ENCODE measurements at regions of chr16 and their contacts with region 1.

Region 1: DNA sequence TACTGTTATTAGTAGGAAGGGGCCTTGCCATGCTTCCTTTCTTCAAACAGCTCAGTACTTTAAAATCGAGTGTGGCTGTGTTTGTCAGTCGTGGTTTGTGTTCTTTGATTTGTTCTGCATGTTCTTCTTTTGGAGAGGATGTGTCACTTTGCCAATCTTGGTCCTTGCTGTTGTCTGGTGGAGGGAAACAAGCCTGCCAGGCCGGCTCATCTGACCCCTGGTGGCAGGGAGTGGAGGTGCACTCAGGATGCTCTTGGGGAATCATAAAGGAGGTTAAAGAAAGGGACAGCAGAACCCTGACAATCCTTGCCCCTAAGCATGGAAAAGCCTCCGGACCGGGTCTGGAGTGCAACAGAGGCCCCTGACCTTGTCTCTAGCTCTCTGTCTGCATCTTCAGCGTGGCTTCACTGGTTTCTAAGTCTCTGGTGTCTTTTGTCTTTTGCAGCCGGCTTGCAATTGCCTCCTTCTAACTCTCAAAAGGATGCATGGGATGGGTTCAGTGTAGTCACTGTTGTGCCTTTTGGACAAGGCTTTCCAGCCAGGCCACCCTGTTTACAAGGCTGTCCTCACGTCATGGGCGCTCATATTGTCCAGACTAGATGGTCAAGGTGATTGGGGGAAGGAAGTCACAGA is 135.8 kb downstream of the WWOX start:
- DNase-seq: peak; percentile 39
- ATAC-seq: peak; percentile 80
- H3K4me3 ChIP-seq: no peak overlapping the region
- H3K27ac ChIP-seq: no peak overlapping the region
- H3K4me1 ChIP-seq: peaks cover 4% of the 10 kb centered on the region; the same call in 1 of the 2 replicates
- H3K27me3 ChIP-seq: no peaks in the 10 kb centered on the region
- CTCF ChIP-seq: peak; percentile 86

Region 2: DNA sequence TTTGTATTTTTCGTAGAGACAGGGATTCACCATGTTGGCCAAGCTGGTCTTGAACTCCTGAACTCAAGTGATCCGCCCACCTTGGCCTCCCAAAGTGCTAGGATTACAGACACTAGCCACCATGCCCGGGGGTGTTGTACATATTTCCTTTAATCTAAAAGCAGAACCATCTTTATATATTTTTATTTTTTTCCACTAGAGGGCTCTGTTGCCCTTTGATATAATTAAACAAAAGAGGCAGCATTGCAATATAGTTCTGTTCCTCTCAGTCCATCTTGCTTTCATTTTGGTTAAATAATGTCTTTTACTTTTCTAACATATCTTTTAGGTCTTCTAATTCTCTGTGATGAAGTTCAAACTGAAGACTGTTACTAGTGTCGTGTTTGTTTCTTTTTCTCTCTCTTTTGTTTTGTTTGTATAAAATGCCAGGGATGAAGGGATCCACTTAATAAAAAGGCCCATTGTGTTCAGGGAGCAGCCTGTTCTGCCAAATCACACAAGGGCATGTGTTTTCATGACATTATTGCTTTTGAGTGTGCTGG is 112.4 kb before region 1 on chr16:
- CTCF ChIA-PET with region 1: no interaction called
- POLR2A ChIA-PET with region 1: no interaction called
- in situ Hi-C with region 1: no loop called
- intact Hi-C with region 1: loop called (anchors 2 kb)
- DNase-seq: peak; percentile 20
- ATAC-seq: peak; percentile 71
- H3K4me3 ChIP-seq: no peak overlapping the region
- H3K27ac ChIP-seq: no peak overlapping the region
- H3K4me1 ChIP-seq: peaks cover 2% of the 10 kb centered on the region; the same call in 1 of the 2 replicates
- H3K27me3 ChIP-seq: no peaks in the 10 kb centered on the region
- CTCF ChIP-seq: peak; percentile 50

Region 3: DNA sequence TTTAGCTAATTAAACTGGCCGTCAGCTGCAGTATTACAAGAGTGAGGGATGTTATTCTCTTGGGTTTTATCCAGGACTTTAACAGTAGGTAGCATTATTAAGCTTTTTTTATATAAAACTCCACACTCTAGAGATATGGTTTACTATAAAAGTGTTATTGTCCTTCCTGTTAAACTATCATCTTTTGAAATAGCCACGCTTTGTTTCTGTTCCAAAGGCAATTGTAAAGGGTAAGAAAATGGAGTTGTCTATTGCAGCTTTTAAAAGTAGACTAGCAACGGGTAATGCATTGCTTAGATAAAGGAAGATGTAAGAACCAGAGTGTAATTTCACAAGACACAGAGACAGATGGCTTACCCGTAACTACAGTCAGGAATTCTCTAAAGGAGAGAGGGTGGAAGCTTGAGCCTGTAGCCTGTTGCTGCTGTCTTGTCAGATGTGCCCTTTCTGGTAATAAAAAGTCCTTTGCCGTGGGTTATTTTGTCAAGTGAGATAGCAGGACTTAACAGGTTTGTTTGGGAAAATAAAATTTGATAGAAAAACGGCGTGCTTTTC is 79.4 kb before region 1 on chr16:
- CTCF ChIA-PET with region 1: no interaction called
- POLR2A ChIA-PET with region 1: interaction called, 12 read pairs
- in situ Hi-C with region 1: no loop called
- intact Hi-C with region 1: no loop called
- DNase-seq: no peak
- ATAC-seq: no peak
- H3K4me3 ChIP-seq: no peak overlapping the region
- H3K27ac ChIP-seq: no peak overlapping the region
- H3K4me1 ChIP-seq: no peaks in the 10 kb centered on the region
- H3K27me3 ChIP-seq: no peaks in the 10 kb centered on the region
- CTCF ChIP-seq: no peak

Measured in Panc1 (cell line).